ENCODE measurements at regions of chr5 and their contacts with region 1.

Region 1: DNA sequence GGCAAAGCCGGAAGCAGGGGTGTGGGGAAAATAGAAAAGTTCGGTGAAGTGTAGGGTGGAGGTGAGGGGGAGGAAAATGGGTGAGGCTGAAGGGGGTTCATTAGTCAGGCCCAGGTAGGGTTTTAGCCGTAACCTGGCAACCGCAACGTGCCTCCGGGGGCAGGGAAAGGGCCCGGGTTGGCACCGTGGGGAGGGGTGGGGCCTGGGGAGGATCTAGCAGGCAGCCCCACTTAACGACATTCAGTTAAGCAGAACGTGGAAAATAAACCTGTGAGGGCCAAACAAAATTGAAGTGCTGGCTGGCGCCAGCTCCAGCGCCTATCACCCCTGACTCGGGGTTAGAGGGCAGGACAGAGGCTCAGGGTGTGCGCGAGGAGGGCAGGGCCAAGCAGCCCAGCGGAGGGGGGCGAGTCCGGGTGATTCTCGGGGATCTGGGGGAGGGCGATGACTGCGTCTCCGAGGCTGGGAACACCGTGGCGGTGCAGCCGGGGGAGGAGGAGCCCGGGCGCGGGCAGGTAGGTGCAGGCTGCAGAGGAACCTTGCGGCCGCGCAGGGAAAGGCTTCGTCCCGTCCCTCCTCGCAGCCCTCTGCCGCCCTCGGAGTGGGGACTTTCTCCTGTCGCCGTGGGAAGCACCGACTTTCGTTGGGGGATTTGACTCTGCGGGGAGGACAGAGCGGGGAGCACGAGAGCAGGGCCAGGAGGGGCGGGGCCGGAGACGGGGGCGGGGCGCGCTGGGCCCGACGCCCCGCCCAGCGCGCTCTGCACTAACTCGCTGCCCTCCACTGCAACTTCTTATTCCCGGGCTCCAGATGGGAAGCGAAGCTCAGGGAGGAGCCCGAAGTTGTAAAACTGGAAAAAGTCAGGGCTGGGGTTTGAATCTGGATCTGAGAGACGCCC is 5.1 kb downstream of the RGS14 start:
- DNase-seq: peak; percentile 65
- ATAC-seq: peak; percentile 47 to 70

Region 2: GRCh38 chr5:177311723-177312648 is 50.9 kb before region 1 on chr5 and contains the start of gene MXD3:
- intact Hi-C with region 1: loop called in 1 of 2 experiments (anchors 10 kb)
- DNase-seq: peak; percentile 99
- ATAC-seq: peak; percentile 92 to 97
- total RNA-seq, gene MXD3: 2.8 to 3.4 TPM

Region 3: DNA sequence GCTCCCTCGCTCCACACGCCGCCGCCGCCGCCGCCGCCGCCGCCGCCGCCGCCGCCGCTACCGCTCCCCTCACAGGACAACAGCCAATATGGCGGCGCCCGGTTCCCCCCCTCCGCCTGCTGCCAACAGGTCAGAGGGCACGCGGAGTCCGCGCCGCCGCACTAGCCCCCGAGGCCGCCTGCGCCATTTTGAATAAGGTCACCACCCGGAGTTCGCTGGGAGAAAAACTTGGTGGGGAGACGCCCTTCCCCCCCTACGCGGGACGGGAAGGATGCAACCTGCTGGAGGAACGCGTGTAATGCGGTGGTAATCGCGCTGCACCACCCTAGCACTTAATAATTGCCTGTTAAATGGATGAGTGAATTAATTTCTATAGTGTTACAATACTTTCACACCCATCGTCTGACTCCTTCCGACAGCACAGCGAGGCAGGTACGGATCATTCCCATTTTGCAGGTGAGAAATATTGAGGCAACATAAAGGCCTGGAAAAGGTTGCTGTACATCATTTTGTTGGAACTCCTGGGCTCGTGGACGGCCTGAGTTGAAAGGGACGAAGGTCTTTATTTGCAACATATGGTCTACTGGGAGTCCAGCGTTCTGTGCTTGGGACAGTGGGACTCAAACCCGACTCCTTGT is 191.7 kb after region 1 on chr5 and contains the start of gene FAM193B:
- intact Hi-C with region 1: no loop called
- DNase-seq: peak; percentile 94
- ATAC-seq: peak; percentile 95 to 97
- total RNA-seq, gene FAM193B: 26.1 to 30.1 TPM

Measured in left cardiac atrium (tissue), 4 donors.